Endothelial cell of umbilical vein (primary cell): ENCODE measurements at regions of chr1 and their contacts with region 1.

Region 1: DNA sequence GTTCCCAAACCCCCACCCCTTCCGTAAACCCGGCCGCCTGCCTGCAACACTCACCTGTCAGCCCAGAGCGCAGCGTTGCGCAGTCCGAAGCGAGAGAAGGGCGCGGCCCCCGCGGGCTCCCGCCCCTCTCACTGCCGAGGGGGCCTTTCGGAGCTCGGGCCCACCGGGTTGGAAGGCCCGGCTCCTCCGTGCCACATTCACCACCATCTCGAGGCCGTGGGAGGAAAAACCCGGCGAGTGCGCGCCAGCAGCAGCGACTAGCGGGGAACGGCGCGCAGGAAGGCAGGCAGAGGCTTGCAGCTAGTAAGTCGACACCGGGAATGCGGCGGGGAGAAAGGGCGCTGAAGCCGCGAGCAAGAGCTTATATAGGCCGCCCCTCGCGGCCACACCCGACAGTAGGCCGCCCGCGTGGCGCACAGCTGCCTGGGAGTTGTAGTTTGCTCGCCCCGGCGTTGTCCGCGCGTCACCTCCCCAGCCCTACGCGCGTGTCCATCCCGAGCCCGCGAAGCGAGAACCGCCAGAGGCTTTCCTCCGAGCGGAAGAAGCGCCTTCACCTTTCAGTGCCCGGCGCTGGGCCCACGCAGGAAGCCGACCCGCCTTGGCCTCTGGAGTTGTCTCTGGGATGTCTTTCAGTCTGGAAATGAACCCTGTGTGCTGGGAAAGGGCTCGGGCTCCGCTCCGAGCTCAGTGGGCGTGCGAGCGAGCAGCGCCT is 10.4 kb upstream of the RAB42 start:
- DNase-seq: peak; percentile 97
- H3K4me3 ChIP-seq: peak overlapping the region; percentile 75 to 98 (median 92)
- H3K27ac ChIP-seq: peak overlapping the region; percentile 65
- H3K4me1 ChIP-seq: peaks cover 31% of the 10 kb centered on the region
- H3K27me3 ChIP-seq: no peaks in the 10 kb centered on the region
- CTCF ChIP-seq: no peak
- POLR2A ChIP-seq: peak; percentile 100

Region 2: GRCh38 chr1:28329395-28330153 is 252.1 kb before region 1 on chr1:
- CTCF ChIA-PET with region 1: no interaction called
- POLR2A ChIA-PET with region 1: interaction called, 10 read pairs
- dilution Hi-C with region 1: no loop called
- intact Hi-C with region 1: no loop called
- DNase-seq: peak; percentile 25
- H3K4me3 ChIP-seq: peak overlapping the region; percentile 62 to 93 (median 78)
- H3K27ac ChIP-seq: peak overlapping the region; percentile 91
- H3K4me1 ChIP-seq: peaks cover 11% of the 10 kb centered on the region
- H3K27me3 ChIP-seq: no peaks in the 10 kb centered on the region
- CTCF ChIP-seq: no peak
- POLR2A ChIP-seq: no peak

Region 3: GRCh38 chr1:28369371-28370238 is 212.1 kb before region 1 on chr1 and contains the start of gene PHACTR4:
- CTCF ChIA-PET with region 1: interaction called, 3 read pairs
- POLR2A ChIA-PET with region 1: interaction called, 10 read pairs
- dilution Hi-C with region 1: no loop called
- intact Hi-C with region 1: no loop called
- DNase-seq: peak; percentile 90
- H3K4me3 ChIP-seq: peak within 1 kb of the TSS; percentile 67 to 90 (median 83)
- H3K27ac ChIP-seq: peak within 1 kb of the TSS; percentile 67
- H3K4me1 ChIP-seq: peaks cover 9% of the 10 kb centered on the region
- H3K27me3 ChIP-seq: no peaks in the 10 kb centered on the region
- CTCF ChIP-seq: no peak
- POLR2A ChIP-seq: peak; percentile 96
- total RNA-seq, gene PHACTR4: 59.7 and 61.0 TPM in 2 replicates

Region 4: GRCh38 chr1:28518000-28518744 is 63.5 kb before region 1 on chr1:
- CTCF ChIA-PET with region 1: interaction called, 6 read pairs
- POLR2A ChIA-PET with region 1: interaction called, 19 read pairs
- dilution Hi-C with region 1: no loop called
- intact Hi-C with region 1: loop called (anchors 1 kb)
- DNase-seq: peak; percentile 91
- H3K4me3 ChIP-seq: peak overlapping the region; percentile 52 to 73 (median 57)
- H3K27ac ChIP-seq: peak overlapping the region; percentile 46
- H3K4me1 ChIP-seq: peaks cover 14% of the 10 kb centered on the region
- H3K27me3 ChIP-seq: no peaks in the 10 kb centered on the region
- CTCF ChIP-seq: peak; percentile 94 to 98
- POLR2A ChIP-seq: peak; percentile 87

Region 5: GRCh38 chr1:28591708-28592320 is 10.1 kb after region 1 on chr1 and contains the start of gene RAB42:
- CTCF ChIA-PET with region 1: interaction called, 5 read pairs
- POLR2A ChIA-PET with region 1: interaction called, 16 read pairs
- dilution Hi-C with region 1: no loop called
- intact Hi-C with region 1: no loop called
- DNase-seq: no peak
- H3K4me3 ChIP-seq: peak within 1 kb of the TSS in 2 of 3 experiments; percentile 31 to 37
- H3K27ac ChIP-seq: no peak within 1 kb of the TSS
- H3K4me1 ChIP-seq: peaks cover 3% of the 10 kb centered on the region
- H3K27me3 ChIP-seq: no peaks in the 10 kb centered on the region
- CTCF ChIP-seq: no peak
- POLR2A ChIP-seq: no peak
- total RNA-seq, gene RAB42: 1.2 and 2.0 TPM in 2 replicates

Region 6: GRCh38 chr1:28642847-28643635 is 61.3 kb after region 1 on chr1 and contains the start of gene TAF12:
- CTCF ChIA-PET with region 1: no interaction called
- POLR2A ChIA-PET with region 1: interaction called, 9 read pairs
- dilution Hi-C with region 1: no loop called
- intact Hi-C with region 1: loop called (anchors 1 kb)
- DNase-seq: peak; percentile 98
- H3K4me3 ChIP-seq: peak within 1 kb of the TSS; percentile 70 to 89 (median 82)
- H3K27ac ChIP-seq: peak within 1 kb of the TSS; percentile 91
- H3K4me1 ChIP-seq: peaks cover 20% of the 10 kb centered on the region
- H3K27me3 ChIP-seq: no peaks in the 10 kb centered on the region
- CTCF ChIP-seq: peak in 1 of 2 donors; percentile 48
- POLR2A ChIP-seq: peak; percentile 100
- total RNA-seq, gene TAF12: 15.3 and 18.2 TPM in 2 replicates

Region 7: GRCh38 chr1:29124366-29125236 is 542.9 kb after region 1 on chr1:
- CTCF ChIA-PET with region 1: no interaction called
- POLR2A ChIA-PET with region 1: no interaction called
- dilution Hi-C with region 1: no loop called
- intact Hi-C with region 1: no loop called
- DNase-seq: peak; percentile 72
- H3K4me3 ChIP-seq: peak overlapping the region; percentile 33 to 52 (median 42)
- H3K27ac ChIP-seq: peak overlapping the region; percentile 46
- H3K4me1 ChIP-seq: peaks cover 23% of the 10 kb centered on the region
- H3K27me3 ChIP-seq: peaks cover 0 to 14% of the 10 kb centered on the region in 2 experiments
- CTCF ChIP-seq: peak; percentile 55 to 72
- POLR2A ChIP-seq: peak; percentile 26